ENCODE measurements at regions of chr17 and their contacts with region 1.

Region 1: GRCh38 chr17:80826955-80827645 is 164.5 kb upstream of the CHMP6 start:
- DNase-seq: peak; percentile 87 to 92
- ATAC-seq: peak; percentile 93 to 96 (median 94)
- H3K4me3 ChIP-seq: peak overlapping the region; percentile 43
- H3K27ac ChIP-seq: peak overlapping the region; percentile 97
- H3K4me1 ChIP-seq: peaks cover 28% of the 10 kb centered on the region
- H3K27me3 ChIP-seq: no peaks in the 10 kb centered on the region
- CTCF ChIP-seq: no peak

Region 2: GRCh38 chr17:80751070-80751945 is 75.8 kb before region 1 on chr17:
- intact Hi-C with region 1: loop called in 1 of 2 experiments (anchors 5 kb)
- DNase-seq: peak; percentile 75 to 94
- ATAC-seq: peak; percentile 88 to 90 (median 90)
- H3K4me3 ChIP-seq: peak overlapping the region; percentile 59
- H3K27ac ChIP-seq: peak overlapping the region; percentile 98
- H3K4me1 ChIP-seq: peaks cover 30% of the 10 kb centered on the region
- H3K27me3 ChIP-seq: no peaks in the 10 kb centered on the region
- CTCF ChIP-seq: no peak